Transverse colon (tissue), 4 donors: ENCODE measurements at regions of chr1 and their contacts with region 1.

Region 1: GRCh38 chr1:8925406-8925805 is 20.3 kb upstream of the CA6 start:
- DNase-seq: no peak
- H3K4me3 ChIP-seq: no peak overlapping the region
- H3K27ac ChIP-seq: no peak overlapping the region
- H3K4me1 ChIP-seq: no peaks in the 10 kb centered on the region
- H3K27me3 ChIP-seq: no peaks in the 10 kb centered on the region
- CTCF ChIP-seq: no peak
- EP300 ChIP-seq: no peak
- POLR2A ChIP-seq: no peak

Region 2: GRCh38 chr1:8965121-8965820 is 39.9 kb after region 1 on chr1:
- in situ Hi-C with region 1: no loop called
- intact Hi-C with region 1: loop called (anchors 5 kb)
- DNase-seq: no peak
- H3K4me3 ChIP-seq: no peak overlapping the region
- H3K27ac ChIP-seq: no peak overlapping the region
- H3K4me1 ChIP-seq: no peaks in the 10 kb centered on the region
- H3K27me3 ChIP-seq: no peaks in the 10 kb centered on the region
- CTCF ChIP-seq: no peak
- EP300 ChIP-seq: no peak
- POLR2A ChIP-seq: no peak

Region 3: DNA sequence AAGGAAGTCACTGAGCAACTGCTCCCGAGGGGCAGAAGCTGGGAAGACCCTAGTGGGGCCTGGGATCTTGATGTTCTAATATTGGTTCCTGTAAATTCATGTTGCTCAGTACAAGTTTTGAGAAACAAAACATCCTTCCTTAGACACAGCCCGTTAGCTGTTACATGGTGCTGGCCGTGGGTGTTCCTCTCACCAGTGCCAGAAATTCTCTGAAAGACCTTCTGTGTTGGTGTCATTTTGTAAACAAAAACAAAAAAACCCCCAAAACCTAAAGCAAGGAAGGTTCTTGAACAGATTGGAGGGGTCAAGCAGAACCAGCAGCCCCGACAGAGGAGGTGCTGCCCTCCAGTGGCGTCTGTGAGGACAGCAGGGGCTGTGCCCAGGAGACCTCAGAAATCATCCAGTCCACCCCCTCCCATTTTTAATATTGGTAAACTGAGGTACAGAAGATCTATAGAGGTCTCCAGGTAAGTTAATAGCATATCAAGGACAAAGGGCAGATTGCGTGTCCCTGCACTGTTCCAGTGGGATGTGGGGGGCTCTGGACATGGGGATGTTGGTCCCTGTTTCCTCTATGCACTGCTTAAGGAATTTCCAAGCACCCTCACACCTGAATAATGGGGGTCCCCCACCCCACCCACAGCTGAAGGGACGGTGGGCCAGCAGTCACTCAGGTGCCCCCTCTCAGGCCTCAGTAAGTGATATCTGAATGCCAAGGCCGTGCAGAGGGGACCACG is 62.6 kb after region 1 on chr1:
- in situ Hi-C with region 1: loop called in 2 of 4 experiments (anchors 10 kb)
- intact Hi-C with region 1: no loop called
- DNase-seq: peak; percentile 52
- H3K4me3 ChIP-seq: no peak overlapping the region
- H3K27ac ChIP-seq: peak overlapping the region in 1 of 4 donors; percentile 14
- H3K4me1 ChIP-seq: peaks cover 4 to 22% (median 12%) of the 10 kb centered on the region in 4 donors
- H3K27me3 ChIP-seq: no peaks in the 10 kb centered on the region
- CTCF ChIP-seq: peak; percentile 79 to 97 (median 94)
- EP300 ChIP-seq: no peak
- POLR2A ChIP-seq: no peak

Region 4: DNA sequence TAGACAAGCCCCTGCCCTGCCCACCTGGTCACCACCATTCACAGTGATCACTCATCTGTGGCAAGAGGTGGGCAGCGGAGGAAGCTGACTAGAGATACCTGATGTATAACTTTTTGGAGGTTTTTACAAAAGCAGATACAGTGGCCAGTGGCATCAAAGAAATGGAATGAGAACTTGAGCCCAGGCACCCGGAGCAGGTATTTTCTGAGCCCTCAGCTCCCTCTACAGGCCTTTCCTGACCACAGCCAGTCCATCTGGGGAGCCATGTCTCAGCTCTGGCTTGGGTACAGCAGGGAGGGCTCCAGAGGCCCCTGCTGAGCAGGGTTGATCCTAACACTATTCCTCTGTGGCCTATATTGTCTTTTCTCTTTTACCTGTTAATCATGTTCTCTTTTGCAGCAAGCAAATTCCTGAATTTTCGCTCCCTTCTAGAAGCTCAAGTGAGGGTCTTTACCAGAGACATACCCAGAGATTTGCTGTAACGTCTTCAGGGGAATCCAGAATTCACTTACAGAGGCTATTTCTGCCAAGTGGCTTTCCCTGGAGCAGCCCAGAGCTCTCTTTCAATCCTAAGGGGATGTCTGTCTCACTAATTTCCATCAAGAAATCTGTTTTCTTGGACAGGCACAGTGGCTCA is 176.2 kb after region 1 on chr1:
- in situ Hi-C with region 1: no loop called
- intact Hi-C with region 1: loop called (anchors 5 kb)
- DNase-seq: peak; percentile 52
- H3K4me3 ChIP-seq: no peak overlapping the region
- H3K27ac ChIP-seq: no peak overlapping the region
- H3K4me1 ChIP-seq: no peaks in the 10 kb centered on the region
- H3K27me3 ChIP-seq: no peaks in the 10 kb centered on the region
- CTCF ChIP-seq: peak; percentile 48 to 71 (median 59)
- EP300 ChIP-seq: no peak
- POLR2A ChIP-seq: no peak